HCT116 (cell line): ENCODE measurements at regions of chr17 and their contacts with region 1.

Region 1: DNA sequence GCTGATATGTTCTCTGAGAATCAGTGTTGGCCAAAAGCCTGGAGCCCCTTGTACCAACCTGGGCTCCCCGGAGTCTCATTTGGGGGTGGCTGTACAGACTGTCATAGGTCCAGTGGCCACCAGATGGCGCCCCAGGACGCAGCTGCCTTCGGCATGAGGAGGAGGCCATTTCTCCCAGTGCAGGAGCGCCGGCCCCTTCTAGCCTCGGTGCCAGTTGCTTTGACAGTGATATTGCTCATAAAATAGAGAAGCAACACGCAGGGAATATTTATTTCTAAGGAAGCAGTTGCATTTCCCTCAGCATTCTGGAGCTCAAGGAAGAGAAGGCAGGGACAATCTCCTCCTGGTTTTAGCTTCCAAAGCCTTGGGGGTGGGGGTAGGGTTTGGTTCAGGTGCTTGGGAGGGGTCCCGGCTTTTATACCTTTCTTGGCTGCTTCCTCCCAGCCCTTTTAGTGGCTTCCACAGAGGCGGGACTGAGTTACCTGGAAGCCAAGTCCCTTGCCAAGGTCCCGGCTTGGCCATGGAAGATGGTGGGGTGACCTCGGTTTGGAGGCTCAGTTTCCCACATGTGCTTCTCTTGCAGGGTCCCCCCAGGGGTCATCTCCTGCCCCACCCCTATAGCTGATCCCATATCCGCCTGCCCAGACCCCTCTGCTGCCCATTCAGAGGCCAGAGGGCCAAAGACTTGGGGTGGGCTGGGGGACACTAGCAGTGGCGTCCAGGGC is 117.8 kb upstream of the CDC42EP4 start:
- DNase-seq: peak; percentile 62
- ATAC-seq: peak; percentile 99
- H3K4me3 ChIP-seq: no peak overlapping the region; a peak in 1 of 4 replicates
- H3K27ac ChIP-seq: no peak overlapping the region
- H3K4me1 ChIP-seq: peaks cover 0 to 4% of the 10 kb centered on the region in 2 experiments; a peak in 2 of 4 replicates
- H3K27me3 ChIP-seq: 0 out of 2 replicates have a peak, but pooled peaks cover 4% of the 10 kb centered on the region
- CTCF ChIP-seq: peak; percentile 92 to 100 (median 100)
- POLR2A ChIP-seq: no peak
- RAD21 ChIP-seq: peak; percentile 98

Region 2: GRCh38 chr17:73414171-73414955 is 15.2 kb before region 1 on chr17:
- CTCF ChIA-PET with region 1: no interaction called
- POLR2A ChIA-PET with region 1: no interaction called
- RAD21 ChIA-PET with region 1: no interaction called
- intact Hi-C with region 1: no loop called
- DNase-seq: no peak
- ATAC-seq: no peak
- H3K4me3 ChIP-seq: no peak overlapping the region
- H3K27ac ChIP-seq: no peak overlapping the region
- H3K4me1 ChIP-seq: no peaks in the 10 kb centered on the region
- H3K27me3 ChIP-seq: no peaks in the 10 kb centered on the region
- CTCF ChIP-seq: no peak
- POLR2A ChIP-seq: no peak
- RAD21 ChIP-seq: no peak

Region 3: DNA sequence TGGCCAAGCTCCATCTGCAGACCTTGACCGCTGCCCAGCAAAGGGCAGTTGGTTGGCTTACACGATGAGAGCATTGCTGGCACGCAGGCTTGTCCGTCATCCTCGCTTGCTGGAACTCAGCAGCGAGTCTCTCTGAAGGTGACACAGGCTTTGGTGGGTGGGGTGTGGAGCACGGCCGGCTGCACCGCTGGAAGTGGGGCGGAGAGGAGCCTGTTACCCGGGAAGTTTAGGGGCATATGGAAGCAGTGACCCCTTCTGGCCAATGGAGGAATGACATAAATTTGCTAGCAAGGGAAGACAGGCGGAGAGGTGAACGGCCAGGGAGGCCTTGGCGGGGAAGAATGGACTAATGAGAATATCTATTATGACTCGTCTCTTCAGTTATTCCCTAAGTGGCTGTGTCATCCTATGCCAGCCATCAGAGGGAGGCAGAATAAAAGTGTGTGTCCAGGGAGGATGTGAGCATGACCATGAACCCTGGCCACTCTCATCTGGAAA is 280.5 kb after region 1 on chr17:
- CTCF ChIA-PET with region 1: interaction called, 20 read pairs
- POLR2A ChIA-PET with region 1: no interaction called
- RAD21 ChIA-PET with region 1: interaction called in 1 of 2 experiments, 6 read pairs
- intact Hi-C with region 1: loop called (anchors 1 kb)
- DNase-seq: peak; percentile 67
- ATAC-seq: peak; percentile 94
- H3K4me3 ChIP-seq: no peak overlapping the region
- H3K27ac ChIP-seq: no peak overlapping the region
- H3K4me1 ChIP-seq: peaks cover 0 to 5% of the 10 kb centered on the region in 2 experiments; a peak in 1 of 4 replicates
- H3K27me3 ChIP-seq: peaks cover 55% of the 10 kb centered on the region
- CTCF ChIP-seq: peak; percentile 83 to 94 (median 90)
- POLR2A ChIP-seq: no peak
- RAD21 ChIP-seq: peak; percentile 90

Region 4: GRCh38 chr17:73841431-73842060 is 411.9 kb after region 1 on chr17:
- CTCF ChIA-PET with region 1: interaction called, 8 read pairs
- POLR2A ChIA-PET with region 1: no interaction called
- RAD21 ChIA-PET with region 1: interaction called in 1 of 2 experiments, 3 read pairs
- intact Hi-C with region 1: loop called (anchors 1 kb)
- DNase-seq: no peak
- ATAC-seq: peak; percentile 90
- H3K4me3 ChIP-seq: no peak overlapping the region
- H3K27ac ChIP-seq: no peak overlapping the region
- H3K4me1 ChIP-seq: no peaks in the 10 kb centered on the region
- H3K27me3 ChIP-seq: peaks cover 14% of the 10 kb centered on the region
- CTCF ChIP-seq: peak; percentile 62 to 95 (median 84); a peak in 5 of 6 replicates
- POLR2A ChIP-seq: no peak
- RAD21 ChIP-seq: peak; percentile 86

Region 5: GRCh38 chr17:73998653-73999645 is 569.3 kb after region 1 on chr17:
- CTCF ChIA-PET with region 1: interaction called, 3 read pairs
- POLR2A ChIA-PET with region 1: no interaction called
- RAD21 ChIA-PET with region 1: no interaction called
- intact Hi-C with region 1: loop called (anchors 1 kb)
- DNase-seq: peak; percentile 35
- ATAC-seq: peak; percentile 99
- H3K4me3 ChIP-seq: no peak overlapping the region
- H3K27ac ChIP-seq: no peak overlapping the region
- H3K4me1 ChIP-seq: no peaks in the 10 kb centered on the region
- H3K27me3 ChIP-seq: peaks cover 12% of the 10 kb centered on the region; the same call in 1 of the 2 replicates
- CTCF ChIP-seq: peak; percentile 49 to 99 (median 93)
- POLR2A ChIP-seq: no peak
- RAD21 ChIP-seq: peak; percentile 70

Region 6: DNA sequence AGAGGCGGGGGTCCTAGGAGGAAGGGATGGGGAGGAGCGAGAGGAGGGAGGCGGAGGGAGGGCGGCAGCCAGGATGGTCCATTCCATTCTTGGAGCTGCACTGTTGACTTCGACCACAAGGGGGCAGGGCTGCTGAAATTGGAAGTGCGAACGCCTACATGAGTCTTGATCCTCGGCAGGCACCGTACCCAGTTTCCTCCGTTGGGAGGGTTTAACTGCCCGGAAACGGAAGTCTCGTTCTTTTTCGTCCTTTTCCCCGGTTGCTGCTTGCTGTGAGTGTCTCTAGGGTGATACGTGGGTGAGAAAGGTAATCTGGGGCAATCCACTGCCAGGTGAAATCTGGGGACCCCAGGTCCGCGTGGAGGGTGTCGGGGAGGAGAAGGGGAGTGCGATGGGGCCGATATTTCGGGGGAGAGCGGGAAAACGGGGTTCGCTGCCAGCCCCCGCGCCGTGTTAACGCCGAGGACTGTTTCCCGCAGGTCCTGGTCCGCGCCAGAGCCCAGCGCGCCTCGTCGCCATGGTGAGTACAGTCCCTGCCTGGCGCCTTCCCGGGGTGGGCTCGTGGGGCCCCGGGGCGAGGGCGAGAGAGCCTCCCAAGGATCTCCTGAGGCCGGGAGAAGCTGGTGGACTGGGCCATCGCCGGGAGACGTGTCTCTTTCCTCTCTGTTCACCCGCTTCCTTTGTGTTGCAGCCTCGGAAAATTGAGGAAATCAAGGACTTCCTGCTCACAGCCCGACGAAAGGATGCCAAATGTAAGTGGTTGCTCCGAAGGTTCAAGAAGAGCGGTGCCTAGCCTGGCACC is 774.0 kb after region 1 on chr17 and contains the start of gene RPL38:
- CTCF ChIA-PET with region 1: interaction called, 12 read pairs
- POLR2A ChIA-PET with region 1: no interaction called
- RAD21 ChIA-PET with region 1: no interaction called
- intact Hi-C with region 1: no loop called
- DNase-seq: peak; percentile 99
- ATAC-seq: peak; percentile 74
- H3K4me3 ChIP-seq: peak within 1 kb of the TSS; percentile 98 to 99
- H3K27ac ChIP-seq: peak within 1 kb of the TSS; percentile 65
- H3K4me1 ChIP-seq: peaks cover 11 to 48% of the 10 kb centered on the region in 2 experiments
- H3K27me3 ChIP-seq: no peaks in the 10 kb centered on the region
- CTCF ChIP-seq: peak; percentile 83 to 98 (median 98)
- POLR2A ChIP-seq: peak; percentile 98
- RAD21 ChIP-seq: no peak
- total RNA-seq, gene RPL38: 1,628 TPM